MCF 10A (cell line): ENCODE measurements at regions of chr4 and their contacts with region 1.

Region 1: GRCh38 chr4:51895813-51896408 is 53.0 kb downstream of the DCUN1D4 start:
- DNase-seq: peak; percentile 68
- H3K4me3 Mint-ChIP-seq: no peak overlapping the region
- H3K27ac Mint-ChIP-seq: peak overlapping the region; percentile 76
- H3K4me1 Mint-ChIP-seq: peaks cover 11% of the 10 kb centered on the region
- H3K27me3 Mint-ChIP-seq: no peaks in the 10 kb centered on the region
- CTCF ChIP-seq: peak; percentile 44

Region 2: GRCh38 chr4:51880016-51880915 is 15.6 kb before region 1 on chr4:
- CTCF ChIA-PET with region 1: interaction called, 41 read pairs
- POLR2A ChIA-PET with region 1: no interaction called
- intact Hi-C with region 1: no loop called
- DNase-seq: no peak
- H3K4me3 Mint-ChIP-seq: no peak overlapping the region
- H3K27ac Mint-ChIP-seq: no peak overlapping the region
- H3K4me1 Mint-ChIP-seq: peaks cover 8% of the 10 kb centered on the region
- H3K27me3 Mint-ChIP-seq: no peaks in the 10 kb centered on the region
- CTCF ChIP-seq: no peak

Region 3: GRCh38 chr4:51906167-51906958 is 10.5 kb after region 1 on chr4:
- CTCF ChIA-PET with region 1: interaction called, 53 read pairs
- POLR2A ChIA-PET with region 1: no interaction called
- intact Hi-C with region 1: no loop called
- DNase-seq: no peak
- H3K4me3 Mint-ChIP-seq: no peak overlapping the region
- H3K27ac Mint-ChIP-seq: no peak overlapping the region
- H3K4me1 Mint-ChIP-seq: no peaks in the 10 kb centered on the region
- H3K27me3 Mint-ChIP-seq: no peaks in the 10 kb centered on the region
- CTCF ChIP-seq: no peak

Region 4: GRCh38 chr4:52015366-52015765 is 119.5 kb after region 1 on chr4:
- CTCF ChIA-PET with region 1: interaction called, 11 read pairs
- POLR2A ChIA-PET with region 1: no interaction called
- intact Hi-C with region 1: loop called (anchors 2 kb)
- DNase-seq: peak; percentile 6
- H3K4me3 Mint-ChIP-seq: no peak overlapping the region
- H3K27ac Mint-ChIP-seq: no peak overlapping the region
- H3K4me1 Mint-ChIP-seq: peaks cover 7% of the 10 kb centered on the region
- H3K27me3 Mint-ChIP-seq: no peaks in the 10 kb centered on the region
- CTCF ChIP-seq: peak; percentile 12

Region 5: DNA sequence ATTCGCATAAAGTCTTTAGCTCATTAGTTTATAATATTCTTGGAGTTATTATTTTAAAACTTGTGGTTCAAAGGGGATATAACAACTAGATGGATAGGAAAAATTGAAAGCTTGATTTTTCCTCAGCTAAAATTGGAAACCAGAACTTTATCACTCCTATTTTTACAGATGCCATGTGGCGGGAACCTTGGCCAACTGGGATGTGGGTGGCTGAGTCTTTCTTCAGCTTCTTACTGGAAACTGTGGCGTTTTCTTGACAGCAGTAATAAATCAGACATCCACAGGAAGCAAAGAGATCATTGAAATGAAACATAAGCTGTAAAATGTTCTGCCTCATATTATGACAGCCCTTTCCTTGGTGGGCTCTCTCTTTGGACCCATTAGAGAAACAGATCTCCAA is 239.3 kb after region 1 on chr4:
- CTCF ChIA-PET with region 1: no interaction called
- POLR2A ChIA-PET with region 1: no interaction called
- intact Hi-C with region 1: loop called (anchors 5 kb)
- DNase-seq: no peak
- H3K4me3 Mint-ChIP-seq: no peak overlapping the region
- H3K27ac Mint-ChIP-seq: no peak overlapping the region
- H3K4me1 Mint-ChIP-seq: no peaks in the 10 kb centered on the region
- H3K27me3 Mint-ChIP-seq: no peaks in the 10 kb centered on the region
- CTCF ChIP-seq: no peak

Region 6: DNA sequence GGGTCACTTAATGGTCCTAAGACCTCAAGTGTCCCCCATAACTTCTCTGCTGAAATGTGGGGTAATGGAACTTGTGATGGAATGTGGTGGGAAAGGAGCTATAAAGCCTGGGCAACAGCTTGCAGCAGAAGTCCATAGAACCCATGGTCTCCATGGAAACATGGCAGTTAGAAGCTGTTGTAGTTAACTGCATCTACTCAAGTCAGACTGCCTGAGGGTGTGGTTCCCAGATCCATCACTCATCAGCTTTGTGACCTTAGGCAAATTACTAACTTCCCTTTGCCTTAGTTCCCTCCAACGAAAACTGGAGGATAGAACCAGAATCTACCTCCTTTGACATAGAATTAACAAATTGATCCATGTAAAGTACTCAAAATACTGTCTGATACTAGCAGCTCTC is 268.2 kb after region 1 on chr4:
- CTCF ChIA-PET with region 1: no interaction called
- POLR2A ChIA-PET with region 1: no interaction called
- intact Hi-C with region 1: no loop called
- DNase-seq: no peak
- H3K4me3 Mint-ChIP-seq: no peak overlapping the region
- H3K27ac Mint-ChIP-seq: no peak overlapping the region
- H3K4me1 Mint-ChIP-seq: no peaks in the 10 kb centered on the region
- H3K27me3 Mint-ChIP-seq: peaks cover 6% of the 10 kb centered on the region
- CTCF ChIP-seq: no peak